Common myeloid progenitor, CD34-positive (primary cell): ENCODE measurements at regions of chr7 and their contacts with region 1.

Region 1: GRCh38 chr7:106112117-106112971 is at the start of gene SYPL1:
- DNase-seq: peak; percentile 96 to 98 (median 97)
- H3K4me3 ChIP-seq: peak within 1 kb of the TSS; percentile 83 to 97 (median 91)
- H3K27ac ChIP-seq: peak within 1 kb of the TSS; percentile 91 to 95
- H3K4me1 ChIP-seq: peaks cover 42 to 69% (median 60%) of the 10 kb centered on the region in 4 experiments
- H3K27me3 ChIP-seq: no peaks in the 10 kb centered on the region

Region 2: DNA sequence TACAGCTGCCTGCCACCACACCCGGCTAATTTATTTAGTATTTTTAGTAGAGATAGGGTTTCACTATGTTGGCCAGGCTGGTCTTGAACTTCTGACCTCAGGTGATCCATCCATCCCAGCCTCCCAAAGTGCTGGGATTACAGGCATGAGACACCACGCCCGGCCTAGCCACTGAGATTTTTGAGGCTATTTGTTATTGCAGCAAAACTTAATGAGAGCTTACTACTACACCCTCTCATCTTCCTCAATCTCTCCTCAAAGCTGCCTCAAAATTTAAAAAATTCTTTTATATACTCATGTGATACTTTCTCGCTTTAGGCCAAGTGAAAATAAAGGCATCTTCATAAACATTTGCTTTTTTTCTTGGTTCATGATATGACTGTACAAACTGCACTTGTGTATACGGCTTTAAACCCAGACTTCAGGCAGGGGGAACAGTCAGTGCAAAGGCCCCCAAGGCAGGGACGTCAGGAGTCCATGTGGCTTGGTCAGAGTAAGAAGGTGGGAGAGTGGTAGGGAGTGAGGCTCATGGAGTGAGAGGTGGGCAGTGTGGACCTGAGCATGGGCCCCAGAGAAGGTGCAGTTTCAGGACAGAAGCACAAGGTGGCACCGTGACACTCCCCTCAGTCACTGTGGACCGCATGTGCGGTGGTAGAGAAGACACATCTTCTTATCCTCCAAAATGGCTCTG is 55.7 kb before region 1 on chr7:
- CTCF ChIA-PET with region 1: interaction called, 31 read pairs
- POLR2A ChIA-PET with region 1: interaction called, 3 read pairs
- DNase-seq: peak; percentile 72 to 85 (median 83)
- H3K4me3 ChIP-seq: no peak overlapping the region
- H3K27ac ChIP-seq: no peak overlapping the region
- H3K4me1 ChIP-seq: peaks cover 7 to 42% (median 27%) of the 10 kb centered on the region in 4 experiments
- H3K27me3 ChIP-seq: no peaks in the 10 kb centered on the region

Region 3: GRCh38 chr7:106101726-106102125 is 10.6 kb before region 1 on chr7:
- CTCF ChIA-PET with region 1: interaction called, 15 read pairs
- POLR2A ChIA-PET with region 1: interaction called, 8 read pairs
- DNase-seq: no peak
- H3K4me3 ChIP-seq: no peak overlapping the region
- H3K27ac ChIP-seq: peak overlapping the region in 1 of 2 experiments; percentile 37
- H3K4me1 ChIP-seq: peaks cover 7 to 50% (median 17%) of the 10 kb centered on the region in 4 experiments
- H3K27me3 ChIP-seq: no peaks in the 10 kb centered on the region